ENCODE measurements at regions of chr2 and their contacts with region 1.

Region 1: GRCh38 chr2:149017116-149017985 is 21.1 kb upstream of the LYPD6B start:
- DNase-seq: peak; percentile 84
- H3K4me3 ChIP-seq: no peak overlapping the region
- H3K27ac ChIP-seq: no peak overlapping the region
- H3K4me1 ChIP-seq: peaks cover 46% of the 10 kb centered on the region
- CTCF ChIP-seq: peak; percentile 95

Region 2: DNA sequence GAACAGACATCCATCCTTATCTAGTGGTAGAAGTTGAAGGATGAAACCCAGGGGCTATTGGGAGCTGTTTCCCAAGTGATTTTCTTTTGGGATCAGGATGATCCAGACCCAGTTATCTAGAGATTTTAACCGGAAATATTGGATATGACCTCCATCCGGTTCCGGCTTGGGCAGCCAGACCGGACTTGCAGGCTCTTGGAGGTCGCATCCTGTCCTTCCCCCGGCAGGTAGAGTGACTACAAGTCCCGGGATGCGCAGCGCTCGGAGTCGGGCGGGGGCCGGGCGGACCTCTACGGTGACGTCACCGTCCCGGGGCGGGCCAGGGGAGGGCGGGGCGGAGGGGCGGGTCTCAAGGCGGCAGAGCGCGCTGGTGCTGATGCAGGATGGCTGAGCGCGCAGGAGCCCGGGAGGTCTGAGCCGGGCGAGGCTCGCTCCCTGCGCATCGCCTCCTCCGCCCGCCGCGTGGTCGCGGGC is 142.4 kb before region 1 on chr2 and contains the start of gene KIF5C:
- CTCF ChIA-PET with region 1: no interaction called
- POLR2A ChIA-PET with region 1: no interaction called
- intact Hi-C with region 1: loop called (anchors 2 kb)
- DNase-seq: peak; percentile 95
- H3K4me3 ChIP-seq: peak within 1 kb of the TSS; percentile 74
- H3K27ac ChIP-seq: no peak within 1 kb of the TSS
- H3K4me1 ChIP-seq: peaks cover 18% of the 10 kb centered on the region
- CTCF ChIP-seq: no peak
- total RNA-seq, gene KIF5C: 8.1 and 15.2 TPM in 2 replicates

Region 3: GRCh38 chr2:149033716-149034115 is 16.4 kb after region 1 on chr2:
- CTCF ChIA-PET with region 1: interaction called, 11 read pairs
- POLR2A ChIA-PET with region 1: interaction called, 33 read pairs
- intact Hi-C with region 1: loop called (anchors 1 kb)
- DNase-seq: peak; percentile 20
- H3K4me3 ChIP-seq: no peak overlapping the region
- H3K27ac ChIP-seq: no peak overlapping the region
- H3K4me1 ChIP-seq: peaks cover 25% of the 10 kb centered on the region
- CTCF ChIP-seq: no peak

Region 4: GRCh38 chr2:149087751-149088150 is 70.4 kb after region 1 on chr2:
- CTCF ChIA-PET with region 1: no interaction called
- POLR2A ChIA-PET with region 1: no interaction called
- intact Hi-C with region 1: loop called (anchors 5 kb)
- DNase-seq: peak; percentile 26
- H3K4me3 ChIP-seq: no peak overlapping the region
- H3K27ac ChIP-seq: no peak overlapping the region
- H3K4me1 ChIP-seq: no peaks in the 10 kb centered on the region
- CTCF ChIP-seq: peak; percentile 78

Region 5: GRCh38 chr2:149160701-149161217 is 143.4 kb after region 1 on chr2:
- CTCF ChIA-PET with region 1: no interaction called
- POLR2A ChIA-PET with region 1: no interaction called
- intact Hi-C with region 1: loop called (anchors 2 kb)
- DNase-seq: peak; percentile 85
- H3K4me3 ChIP-seq: peak overlapping the region; percentile 47
- H3K27ac ChIP-seq: peak overlapping the region; percentile 61
- H3K4me1 ChIP-seq: peaks cover 47% of the 10 kb centered on the region
- CTCF ChIP-seq: no peak

Region 6: GRCh38 chr2:149313512-149313972 is 296.2 kb after region 1 on chr2:
- CTCF ChIA-PET with region 1: interaction called, 3 read pairs
- POLR2A ChIA-PET with region 1: no interaction called
- intact Hi-C with region 1: loop called (anchors 1 kb)
- DNase-seq: peak; percentile 60
- H3K4me3 ChIP-seq: no peak overlapping the region
- H3K27ac ChIP-seq: no peak overlapping the region
- H3K4me1 ChIP-seq: no peaks in the 10 kb centered on the region
- CTCF ChIP-seq: peak; percentile 91

Region 7: DNA sequence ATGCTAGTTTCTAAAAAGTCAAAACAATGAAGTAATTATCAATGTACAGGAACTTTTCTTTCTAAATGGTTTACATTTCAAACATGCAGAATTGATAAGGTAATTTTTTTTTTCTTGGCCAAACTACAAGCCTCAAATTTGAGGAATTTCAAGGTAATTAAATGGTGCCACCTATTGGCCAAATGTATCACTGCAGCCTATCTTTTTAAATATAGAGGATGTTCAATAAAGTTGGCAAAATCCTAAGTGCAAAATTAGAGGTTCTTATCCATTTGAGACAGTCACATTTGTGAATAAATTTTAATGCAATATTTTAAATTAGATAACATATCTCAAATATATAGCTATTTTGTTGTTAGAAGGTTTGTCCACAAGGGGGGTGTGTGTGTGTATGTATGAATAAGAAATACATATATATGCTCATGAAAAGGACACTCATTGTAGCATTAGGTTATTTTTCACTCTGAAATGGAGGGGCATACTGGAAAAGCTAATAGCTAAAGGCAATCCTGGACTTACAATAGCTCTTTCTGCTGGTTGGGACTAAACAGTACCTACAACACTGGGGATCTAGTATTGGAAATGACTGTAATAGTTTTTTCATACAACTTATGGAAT is 544.1 kb after region 1 on chr2:
- CTCF ChIA-PET with region 1: no interaction called
- POLR2A ChIA-PET with region 1: interaction called, 4 read pairs
- intact Hi-C with region 1: loop called (anchors 2 kb)
- DNase-seq: peak; percentile 49
- H3K4me3 ChIP-seq: no peak overlapping the region
- H3K27ac ChIP-seq: no peak overlapping the region
- H3K4me1 ChIP-seq: peaks cover 8% of the 10 kb centered on the region
- CTCF ChIP-seq: peak; percentile 99

Measured in OCI-LY7 (cell line).